ENCODE measurements at regions of chr16 and their contacts with region 1.

Region 1: GRCh38 chr16:52647588-52647987 is 100.6 kb upstream of the TOX3 start:
- DNase-seq: no peak
- H3K4me3 ChIP-seq: no peak overlapping the region
- H3K27ac ChIP-seq: no peak overlapping the region
- H3K4me1 ChIP-seq: no peaks in the 10 kb centered on the region
- H3K27me3 ChIP-seq: no peaks in the 10 kb centered on the region
- CTCF ChIP-seq: no peak
- POLR2A ChIP-seq: no peak

Region 2: GRCh38 chr16:51666821-51667220 is 980.8 kb before region 1 on chr16:
- intact Hi-C with region 1: no loop called
- DNase-seq: no peak
- H3K4me3 ChIP-seq: no peak overlapping the region
- H3K27ac ChIP-seq: no peak overlapping the region
- H3K4me1 ChIP-seq: no peaks in the 10 kb centered on the region
- H3K27me3 ChIP-seq: no peaks in the 10 kb centered on the region
- CTCF ChIP-seq: no peak
- POLR2A ChIP-seq: no peak

Region 3: GRCh38 chr16:52657924-52658323 is 10.3 kb after region 1 on chr16:
- intact Hi-C with region 1: loop called (anchors 1 kb)
- DNase-seq: no peak
- H3K4me3 ChIP-seq: no peak overlapping the region
- H3K27ac ChIP-seq: no peak overlapping the region
- H3K4me1 ChIP-seq: no peaks in the 10 kb centered on the region
- H3K27me3 ChIP-seq: no peaks in the 10 kb centered on the region
- CTCF ChIP-seq: no peak
- POLR2A ChIP-seq: no peak

Region 4: GRCh38 chr16:52741351-52741750 is 93.8 kb after region 1 on chr16:
- intact Hi-C with region 1: no loop called
- DNase-seq: no peak
- H3K4me3 ChIP-seq: no peak overlapping the region
- H3K27ac ChIP-seq: no peak overlapping the region
- H3K4me1 ChIP-seq: no peaks in the 10 kb centered on the region
- H3K27me3 ChIP-seq: no peaks in the 10 kb centered on the region
- CTCF ChIP-seq: no peak
- POLR2A ChIP-seq: no peak

Measured in testis (tissue), 5 donors.